Transverse colon (tissue), 4 donors: ENCODE measurements at regions of chr10 and their contacts with region 1.

Region 1: DNA sequence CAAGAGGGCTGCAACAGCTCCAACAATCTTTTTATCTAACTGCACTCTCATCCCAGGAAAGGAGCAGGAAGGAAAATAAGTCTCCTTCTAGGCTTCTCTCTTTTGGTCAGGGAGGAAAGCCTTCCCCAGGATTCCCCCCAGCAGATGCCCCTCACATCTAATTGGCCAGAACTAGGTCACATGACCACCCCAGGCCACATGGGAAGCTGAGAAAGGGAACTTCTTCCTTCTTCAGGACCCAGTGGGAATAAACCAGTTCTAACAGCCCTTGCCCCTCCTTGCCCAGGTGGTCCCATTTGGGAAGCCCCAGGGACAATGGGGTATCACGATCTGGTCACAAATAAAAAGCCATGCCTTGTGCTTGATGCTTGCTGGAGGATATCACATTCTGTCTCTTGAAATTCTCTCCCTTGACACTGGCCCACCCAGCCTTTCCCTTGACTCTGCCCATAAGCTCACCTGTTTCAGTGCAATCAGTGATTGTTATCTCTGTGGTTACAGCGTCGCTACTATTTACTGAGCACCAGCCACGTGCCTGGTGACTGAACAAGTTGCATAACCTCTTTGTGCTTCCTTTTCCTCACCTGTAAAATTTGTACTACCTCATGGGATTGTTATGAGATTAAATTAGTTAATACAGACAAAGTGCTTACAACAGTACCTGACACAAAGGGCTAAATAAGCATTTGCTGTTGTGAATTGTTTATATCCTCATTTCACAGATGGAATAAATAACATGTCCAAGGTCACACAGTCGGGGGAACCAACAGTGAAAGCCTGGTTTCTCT is 9.0 kb upstream of the TACR2 start:
- DNase-seq: peak; percentile 73
- H3K4me3 ChIP-seq: no peak overlapping the region
- H3K27ac ChIP-seq: peak overlapping the region; percentile 77 to 82 (median 79)
- H3K4me1 ChIP-seq: peaks cover 14 to 48% (median 30%) of the 10 kb centered on the region in 4 donors
- H3K27me3 ChIP-seq: no peaks in the 10 kb centered on the region
- CTCF ChIP-seq: no peak
- EP300 ChIP-seq: no peak
- POLR2A ChIP-seq: no peak

Region 2: GRCh38 chr10:69506834-69507721 is 81.4 kb after region 1 on chr10:
- in situ Hi-C with region 1: loop called in 2 of 4 experiments (anchors 5 kb)
- intact Hi-C with region 1: loop called (anchors 2 kb)
- DNase-seq: no peak
- H3K4me3 ChIP-seq: peak overlapping the region in 1 of 4 donors; percentile 28
- H3K27ac ChIP-seq: peak overlapping the region; percentile 56 to 72 (median 62)
- H3K4me1 ChIP-seq: peaks cover 3 to 12% (median 7%) of the 10 kb centered on the region in 4 donors
- H3K27me3 ChIP-seq: no peaks in the 10 kb centered on the region
- CTCF ChIP-seq: no peak
- EP300 ChIP-seq: no peak
- POLR2A ChIP-seq: no peak

Region 3: DNA sequence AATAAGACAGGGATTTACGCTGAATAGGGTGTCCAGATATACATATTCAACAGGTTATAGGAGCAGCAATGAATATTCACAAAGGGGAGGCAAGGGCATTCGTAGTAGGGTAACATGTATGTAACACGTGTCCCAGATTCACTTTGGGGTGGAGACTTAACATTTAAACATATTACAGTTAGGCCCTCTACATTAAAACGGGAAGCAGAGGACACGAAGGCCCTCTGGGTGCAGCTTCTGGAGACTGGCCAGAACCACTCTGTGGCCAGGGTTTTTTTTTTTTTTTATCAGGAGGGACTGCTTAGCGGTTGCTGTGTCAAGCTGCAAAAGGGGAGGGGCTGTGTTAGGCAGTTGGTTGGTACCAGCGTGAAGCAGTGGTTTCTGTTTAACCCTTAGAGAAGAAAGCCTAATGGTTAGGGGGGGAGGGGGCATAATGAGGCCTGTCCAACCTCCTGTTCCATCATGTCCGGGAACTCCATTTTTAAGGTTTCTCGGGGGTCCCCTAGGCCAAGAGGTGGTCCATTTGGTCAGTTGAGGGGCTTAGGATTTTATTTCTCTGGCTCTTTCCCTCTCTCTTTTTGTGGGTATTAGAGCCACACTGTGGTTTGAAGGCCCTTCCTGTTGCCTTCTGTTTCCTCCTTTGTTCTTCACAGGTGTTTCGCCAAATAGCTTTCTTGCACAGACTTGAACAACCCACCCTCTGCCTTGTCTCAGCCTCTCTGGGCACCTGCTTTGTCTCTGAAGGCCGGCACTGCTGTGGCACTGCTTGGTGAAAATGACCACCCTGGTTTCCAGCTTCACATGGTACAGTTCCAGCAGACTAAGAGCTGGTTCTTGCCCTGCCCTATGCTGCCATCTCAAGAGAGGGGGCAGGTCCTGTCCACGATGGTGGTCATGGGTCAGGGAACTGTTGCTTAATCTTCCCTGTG is 1150.4 kb after region 1 on chr10:
- in situ Hi-C with region 1: no loop called
- intact Hi-C with region 1: no loop called
- DNase-seq: peak; percentile 66
- H3K4me3 ChIP-seq: no peak overlapping the region
- H3K27ac ChIP-seq: peak overlapping the region in 3 of 4 donors; percentile 23 to 58 (median 40)
- H3K4me1 ChIP-seq: peaks cover 11 to 20% (median 14%) of the 10 kb centered on the region in 4 donors
- H3K27me3 ChIP-seq: no peaks in the 10 kb centered on the region
- CTCF ChIP-seq: no peak
- EP300 ChIP-seq: no peak
- POLR2A ChIP-seq: no peak